Psoas muscle (tissue), 8 donors: ENCODE measurements at regions of chr15 and their contacts with region 1.

Region 1: GRCh38 chr15:44968475-44968874 is 12.0 kb downstream of the TERB2 start:
- DNase-seq: no peak
- ATAC-seq: no peak
- H3K4me3 ChIP-seq: no peak overlapping the region
- H3K27ac ChIP-seq: no peak overlapping the region
- H3K4me1 ChIP-seq: no peaks in the 10 kb centered on the region
- H3K27me3 ChIP-seq: no peaks in the 10 kb centered on the region
- CTCF ChIP-seq: no peak

Region 2: DNA sequence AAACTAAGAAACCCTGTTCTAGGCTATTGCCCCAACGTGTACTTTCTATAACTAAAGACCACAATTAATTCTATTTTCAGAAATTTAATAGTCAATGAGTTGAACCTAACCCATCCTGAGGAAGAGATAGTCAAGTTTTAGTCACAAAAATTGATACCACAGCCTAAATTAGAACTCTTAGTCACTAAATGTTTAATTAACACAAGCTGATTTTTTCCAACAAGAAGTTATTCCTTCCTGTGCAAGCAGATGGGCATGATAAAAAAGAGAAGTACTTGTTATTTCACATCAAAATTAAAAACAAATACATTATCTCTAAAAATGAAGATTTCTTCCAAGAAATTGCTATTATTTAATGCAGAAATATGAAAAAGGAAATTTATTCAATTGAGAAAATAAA is 50.3 kb before region 1 on chr15:
- intact Hi-C with region 1: no loop called
- DNase-seq: no peak
- ATAC-seq: no peak
- H3K4me3 ChIP-seq: no peak overlapping the region
- H3K27ac ChIP-seq: no peak overlapping the region
- H3K4me1 ChIP-seq: no peaks in the 10 kb centered on the region
- H3K27me3 ChIP-seq: no peaks in the 10 kb centered on the region
- CTCF ChIP-seq: no peak

Region 3: GRCh38 chr15:45030743-45031142 is 62.3 kb after region 1 on chr15:
- intact Hi-C with region 1: loop called (anchors 5 to 10 kb)
- DNase-seq: no peak
- ATAC-seq: no peak
- H3K4me3 ChIP-seq: no peak overlapping the region
- H3K27ac ChIP-seq: no peak overlapping the region
- H3K4me1 ChIP-seq: no peaks in the 10 kb centered on the region
- H3K27me3 ChIP-seq: no peaks in the 10 kb centered on the region
- CTCF ChIP-seq: no peak

Region 4: DNA sequence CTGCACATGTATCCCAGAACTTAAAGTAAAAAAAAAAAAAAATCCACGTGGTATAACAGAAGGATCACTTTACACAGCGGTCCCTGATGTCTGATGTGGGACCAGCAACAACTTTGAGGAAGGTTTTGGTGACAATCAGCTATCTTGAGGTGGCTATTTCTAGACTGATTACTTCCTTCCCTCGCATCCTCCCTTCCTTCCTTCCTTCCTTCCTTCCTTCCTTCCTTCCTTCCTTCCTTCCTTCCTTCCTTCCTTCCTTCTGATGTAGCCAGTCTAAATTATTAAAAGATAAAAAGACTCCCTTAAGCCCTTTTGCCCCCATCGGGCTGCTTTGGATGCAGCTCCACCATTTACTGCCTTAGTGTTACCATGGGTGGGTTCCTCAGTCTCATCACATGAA is 69.5 kb after region 1 on chr15:
- intact Hi-C with region 1: loop called (anchors 5 to 10 kb)
- DNase-seq: no peak
- ATAC-seq: no peak
- H3K4me3 ChIP-seq: no peak overlapping the region
- H3K27ac ChIP-seq: no peak overlapping the region
- H3K4me1 ChIP-seq: no peaks in the 10 kb centered on the region
- H3K27me3 ChIP-seq: no peaks in the 10 kb centered on the region
- CTCF ChIP-seq: no peak

Region 5: DNA sequence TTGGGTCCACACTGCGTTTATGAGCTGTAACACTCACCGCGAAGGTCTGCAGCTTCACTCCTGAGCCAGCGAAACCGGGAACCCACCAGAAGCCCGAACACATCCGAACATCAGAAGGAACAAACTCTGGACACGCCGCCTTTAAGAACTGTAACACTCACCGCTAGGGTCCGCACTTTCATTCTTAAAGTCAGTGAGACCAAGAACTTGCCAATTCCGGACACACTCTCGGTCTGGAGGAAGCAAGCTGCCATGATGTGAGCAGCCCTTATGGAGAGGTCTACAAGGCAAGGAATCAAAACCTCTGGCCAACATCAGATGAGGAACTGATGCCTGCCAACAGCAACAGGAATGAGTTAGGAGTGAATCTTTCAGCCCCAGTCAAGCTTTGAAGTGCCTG is 346.5 kb after region 1 on chr15:
- intact Hi-C with region 1: no loop called
- DNase-seq: no peak
- ATAC-seq: no peak
- H3K4me3 ChIP-seq: no peak overlapping the region
- H3K27ac ChIP-seq: no peak overlapping the region
- H3K4me1 ChIP-seq: no peaks in the 10 kb centered on the region
- H3K27me3 ChIP-seq: no peaks in the 10 kb centered on the region
- CTCF ChIP-seq: no peak